ENCODE measurements at regions of chr2 and their contacts with region 1.

Region 1: DNA sequence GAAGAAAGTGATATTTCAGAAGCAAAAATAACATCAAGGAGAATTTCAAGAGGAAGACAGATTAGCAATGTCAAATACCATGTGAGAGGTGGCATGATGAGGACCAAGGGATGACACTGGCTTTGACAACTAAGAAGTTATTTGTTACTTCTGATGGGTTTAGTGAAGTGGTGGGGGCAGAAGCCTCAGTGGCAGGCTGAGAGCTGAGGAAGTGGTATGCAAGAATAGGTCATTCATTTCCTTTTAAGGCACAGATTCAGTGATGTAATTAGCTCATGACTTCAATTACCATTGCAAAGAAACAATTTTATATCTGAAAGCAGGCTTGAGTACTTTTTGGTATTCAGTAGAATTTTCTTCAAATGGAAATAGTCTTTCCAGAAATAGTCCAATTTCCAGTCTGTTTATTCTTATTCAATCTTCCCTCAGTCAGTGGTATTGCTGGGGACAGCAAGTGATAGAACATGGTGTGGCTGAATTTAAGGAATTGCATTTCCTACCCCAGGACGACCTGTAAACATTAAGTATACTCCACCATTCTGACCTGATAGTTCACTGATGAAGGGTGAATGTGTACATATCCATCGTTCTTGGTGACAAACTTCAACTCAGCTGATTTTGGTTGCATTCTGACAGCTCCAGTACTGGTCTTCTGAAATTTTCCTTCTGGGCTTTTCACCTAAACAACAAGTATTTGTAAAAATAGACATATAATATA is 28.2 kb downstream of the GEMIN6 start:
- DNase-seq: no peak
- H3K4me3 ChIP-seq: no peak overlapping the region
- H3K27ac ChIP-seq: no peak overlapping the region
- H3K4me1 ChIP-seq: peaks cover 0 to 6% (median 0%) of the 10 kb centered on the region in 4 donors
- H3K27me3 ChIP-seq: no peaks in the 10 kb centered on the region
- CTCF ChIP-seq: no peak
- EP300 ChIP-seq: no peak
- POLR2A ChIP-seq: no peak

Region 2: GRCh38 chr2:38835015-38835601 is 28.9 kb after region 1 on chr2:
- in situ Hi-C with region 1: no loop called
- intact Hi-C with region 1: loop called (anchors 1 kb)
- DNase-seq: no peak
- H3K4me3 ChIP-seq: no peak overlapping the region
- H3K27ac ChIP-seq: peak overlapping the region in 1 of 4 donors; percentile 34
- H3K4me1 ChIP-seq: peaks cover 0 to 7% (median 0%) of the 10 kb centered on the region in 4 donors
- H3K27me3 ChIP-seq: no peaks in the 10 kb centered on the region
- CTCF ChIP-seq: peak in 3 of 5 experiments; percentile 32 to 42 (median 33)
- EP300 ChIP-seq: no peak
- POLR2A ChIP-seq: no peak